Activated CD8-positive, alpha-beta T cell treated with anti-CD3 and anti-CD28 coated beads for 36 hours (primary cell): ENCODE measurements at regions of chr11 and their contacts with region 1.

Region 1: GRCh38 chr11:102268329-102269193 is 48.7 kb upstream of the BIRC3 start:
- DNase-seq: peak; percentile 87
- ATAC-seq: peak; percentile 99
- H3K4me3 Mint-ChIP-seq: peak overlapping the region; percentile 68
- H3K27ac Mint-ChIP-seq: no peak overlapping the region
- H3K4me1 Mint-ChIP-seq: peaks cover 19% of the 10 kb centered on the region
- H3K27me3 Mint-ChIP-seq: peaks cover 15% of the 10 kb centered on the region
- CTCF ChIP-seq: peak; percentile 66

Region 2: DNA sequence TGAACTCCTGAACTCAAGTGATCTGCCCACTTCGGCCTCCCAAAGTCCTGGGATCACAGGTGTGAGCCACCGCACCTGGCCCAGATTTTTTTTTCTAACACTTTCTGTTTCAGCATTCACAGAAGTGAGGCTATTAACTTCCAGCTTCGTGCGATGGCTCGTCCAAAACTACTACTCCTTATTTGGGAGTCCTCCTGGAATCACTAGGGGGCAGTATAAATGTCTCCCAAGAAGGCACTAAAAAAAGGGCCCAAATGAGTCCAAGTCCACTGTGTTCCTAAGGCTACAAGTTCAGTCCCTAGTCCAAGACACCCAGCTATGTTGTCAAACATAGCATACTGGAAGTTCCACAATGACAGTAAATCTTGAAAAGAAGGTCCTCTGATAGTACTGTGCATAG is 14.5 kb before region 1 on chr11:
- CTCF ChIA-PET with region 1: interaction called, 11 read pairs
- POLR2A ChIA-PET with region 1: interaction called, 3 read pairs
- intact Hi-C with region 1: no loop called
- DNase-seq: no peak
- ATAC-seq: no peak
- H3K4me3 Mint-ChIP-seq: no peak overlapping the region
- H3K27ac Mint-ChIP-seq: no peak overlapping the region
- H3K4me1 Mint-ChIP-seq: no peaks in the 10 kb centered on the region
- H3K27me3 Mint-ChIP-seq: no peaks in the 10 kb centered on the region
- CTCF ChIP-seq: peak; percentile 52

Region 3: DNA sequence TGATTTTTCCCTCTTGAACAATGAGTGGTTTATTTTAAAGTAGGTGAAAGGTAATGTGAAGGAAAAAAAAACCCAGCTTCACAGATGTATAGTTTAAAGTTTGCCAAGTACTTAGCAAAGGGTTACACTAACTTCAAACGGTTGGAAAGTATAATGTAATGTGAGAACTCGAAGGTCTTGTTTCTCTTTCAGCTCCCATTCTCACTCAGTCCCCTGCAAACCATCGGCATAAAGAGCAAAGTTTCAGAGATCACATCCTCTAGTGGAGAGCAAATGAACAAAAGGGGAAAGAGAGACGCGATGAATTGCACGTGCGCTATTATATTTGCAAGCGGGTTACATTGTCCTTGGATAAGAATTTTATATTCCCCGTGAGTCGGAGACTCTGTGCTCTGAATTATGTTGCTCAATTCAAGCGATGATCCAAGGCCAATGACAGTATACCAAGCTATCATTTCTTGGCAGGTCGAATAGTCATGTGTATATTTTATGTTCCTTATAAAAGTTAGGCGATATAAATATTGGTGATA is 11.1 kb after region 1 on chr11:
- CTCF ChIA-PET with region 1: interaction called, 23 read pairs
- POLR2A ChIA-PET with region 1: no interaction called
- intact Hi-C with region 1: no loop called
- DNase-seq: peak; percentile 45
- ATAC-seq: peak; percentile 93
- H3K4me3 Mint-ChIP-seq: peak overlapping the region; percentile 8
- H3K27ac Mint-ChIP-seq: no peak overlapping the region
- H3K4me1 Mint-ChIP-seq: peaks cover 13% of the 10 kb centered on the region
- H3K27me3 Mint-ChIP-seq: peaks cover 6% of the 10 kb centered on the region
- CTCF ChIP-seq: peak; percentile 12